CD8-positive, alpha-beta T cell (primary cell): ENCODE measurements at regions of chr22 and their contacts with region 1.

Region 1: GRCh38 chr22:50244420-50245213 is at the start of gene TUBGCP6:
- DNase-seq: peak; percentile 77 to 96 (median 91)
- ATAC-seq: peak; percentile 77
- H3K4me3 ChIP-seq: peak within 1 kb of the TSS; percentile 99
- H3K4me3 Mint-ChIP-seq: peak within 1 kb of the TSS; percentile 100
- H3K27ac ChIP-seq: peak within 1 kb of the TSS; percentile 94 to 99
- H3K27ac Mint-ChIP-seq: peak within 1 kb of the TSS; percentile 100
- H3K4me1 ChIP-seq: peaks cover 56% of the 10 kb centered on the region
- H3K4me1 Mint-ChIP-seq: peaks cover 51% of the 10 kb centered on the region
- H3K27me3 ChIP-seq: no peaks in the 10 kb centered on the region
- H3K27me3 Mint-ChIP-seq: no peaks in the 10 kb centered on the region
- CTCF ChIP-seq: peak; percentile 27
- total RNA-seq, gene TUBGCP6: 121 to 122 TPM

Region 2: GRCh38 chr22:49992921-49993648 is 251.5 kb before region 1 on chr22:
- CTCF ChIA-PET with region 1: no interaction called
- POLR2A ChIA-PET with region 1: no interaction called
- intact Hi-C with region 1: no loop called
- DNase-seq: peak; percentile 39 to 85 (median 74)
- ATAC-seq: peak; percentile 95
- H3K4me3 ChIP-seq: no peak overlapping the region
- H3K4me3 Mint-ChIP-seq: no peak overlapping the region
- H3K27ac ChIP-seq: no peak overlapping the region
- H3K27ac Mint-ChIP-seq: peak overlapping the region; percentile 21
- H3K4me1 ChIP-seq: peaks cover 8% of the 10 kb centered on the region
- H3K4me1 Mint-ChIP-seq: peaks cover 5% of the 10 kb centered on the region
- H3K27me3 ChIP-seq: no peaks in the 10 kb centered on the region
- H3K27me3 Mint-ChIP-seq: peaks cover 3% of the 10 kb centered on the region
- CTCF ChIP-seq: peak; percentile 77

Region 3: DNA sequence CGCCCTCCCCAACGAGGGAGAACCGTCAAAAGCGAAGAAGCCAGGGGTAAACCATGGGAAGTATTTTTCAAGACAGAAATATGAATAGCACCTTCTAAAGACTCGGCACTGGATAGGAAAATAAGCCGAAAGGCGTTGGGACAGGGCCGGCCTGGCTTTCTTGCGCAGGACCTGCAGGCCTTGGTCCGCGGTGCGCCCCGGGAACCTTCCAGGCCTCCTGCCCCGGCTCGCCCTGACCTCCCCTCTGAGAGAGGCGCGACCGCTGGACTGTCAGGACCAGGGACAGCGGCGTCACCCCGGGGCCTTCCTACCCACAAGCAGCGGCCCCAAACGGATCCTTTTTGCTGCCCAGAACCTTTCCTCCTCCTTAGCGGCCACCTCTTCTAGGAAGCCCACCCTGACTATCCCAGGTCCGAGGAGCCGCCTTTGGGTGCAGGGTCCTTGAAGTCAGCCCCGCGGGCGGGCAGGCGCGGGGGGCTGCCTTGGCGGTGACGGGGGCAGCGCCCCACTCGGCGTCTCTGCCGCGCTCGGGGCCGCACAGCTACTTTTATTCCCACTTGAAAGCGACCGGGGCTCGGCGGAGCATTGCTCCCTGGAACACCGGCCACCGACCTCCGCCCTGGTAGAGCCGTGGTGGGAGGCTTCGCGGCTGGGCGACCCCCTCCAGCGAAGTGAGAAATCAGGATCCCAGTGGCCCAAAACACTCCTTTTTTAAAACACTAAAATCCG is 26.2 kb after region 1 on chr22:
- CTCF ChIA-PET with region 1: interaction called, 4 read pairs
- POLR2A ChIA-PET with region 1: no interaction called
- intact Hi-C with region 1: loop called in 1 of 2 experiments (anchors 1 kb)
- DNase-seq: peak; percentile 49 to 82 (median 72)
- ATAC-seq: peak; percentile 64
- H3K4me3 ChIP-seq: peak overlapping the region; percentile 45 to 65
- H3K4me3 Mint-ChIP-seq: peak overlapping the region; percentile 69
- H3K27ac ChIP-seq: no peak overlapping the region
- H3K27ac Mint-ChIP-seq: no peak overlapping the region
- H3K4me1 ChIP-seq: peaks cover 25% of the 10 kb centered on the region
- H3K4me1 Mint-ChIP-seq: peaks cover 18% of the 10 kb centered on the region
- H3K27me3 ChIP-seq: peaks cover 0 to 2% of the 10 kb centered on the region in 2 experiments
- H3K27me3 Mint-ChIP-seq: peaks cover 3% of the 10 kb centered on the region
- CTCF ChIP-seq: no peak

Region 4: DNA sequence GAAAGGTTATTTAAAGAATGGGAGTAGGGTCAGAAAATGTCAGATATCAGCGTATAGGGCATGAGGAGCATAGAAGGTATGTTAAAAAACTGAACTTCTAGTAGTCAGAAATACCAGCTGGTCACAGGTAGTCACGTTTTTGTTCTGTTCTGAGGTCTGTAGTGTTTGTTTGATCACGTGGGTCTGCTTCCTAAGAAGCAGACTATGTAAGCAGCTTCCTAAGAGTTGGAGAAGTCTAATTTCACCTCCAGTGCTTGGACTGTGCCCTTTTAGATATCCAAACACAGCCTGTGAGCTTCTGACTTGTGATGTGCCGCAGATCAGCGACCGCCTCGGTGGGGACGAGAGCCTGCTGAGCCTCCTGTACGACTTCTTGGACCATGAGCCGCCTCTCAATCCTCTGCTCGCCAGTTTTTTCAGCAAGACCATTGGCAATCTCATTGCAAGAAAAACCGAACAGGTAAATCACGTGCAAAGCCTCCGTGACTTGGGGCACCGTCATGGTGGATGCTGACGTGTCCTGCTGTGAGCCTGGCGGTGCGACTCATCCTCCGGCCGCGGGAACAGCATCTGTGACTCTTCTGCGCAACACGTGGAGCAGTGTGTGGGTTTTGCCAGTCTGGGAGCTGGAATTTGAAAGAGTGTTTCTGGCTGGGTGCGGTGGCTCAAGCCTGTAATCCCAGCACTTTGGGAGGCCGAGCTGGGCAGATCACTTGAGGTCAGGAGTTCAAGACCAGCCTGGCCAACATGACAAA is 162.0 kb after region 1 on chr22:
- CTCF ChIA-PET with region 1: no interaction called
- POLR2A ChIA-PET with region 1: no interaction called
- intact Hi-C with region 1: no loop called
- DNase-seq: no peak
- ATAC-seq: no peak
- H3K4me3 ChIP-seq: no peak overlapping the region
- H3K4me3 Mint-ChIP-seq: no peak overlapping the region
- H3K27ac ChIP-seq: no peak overlapping the region
- H3K27ac Mint-ChIP-seq: peak overlapping the region; percentile 43
- H3K4me1 ChIP-seq: no peaks in the 10 kb centered on the region
- H3K4me1 Mint-ChIP-seq: peaks cover 8% of the 10 kb centered on the region
- H3K27me3 ChIP-seq: no peaks in the 10 kb centered on the region
- H3K27me3 Mint-ChIP-seq: no peaks in the 10 kb centered on the region
- CTCF ChIP-seq: no peak

Region 5: DNA sequence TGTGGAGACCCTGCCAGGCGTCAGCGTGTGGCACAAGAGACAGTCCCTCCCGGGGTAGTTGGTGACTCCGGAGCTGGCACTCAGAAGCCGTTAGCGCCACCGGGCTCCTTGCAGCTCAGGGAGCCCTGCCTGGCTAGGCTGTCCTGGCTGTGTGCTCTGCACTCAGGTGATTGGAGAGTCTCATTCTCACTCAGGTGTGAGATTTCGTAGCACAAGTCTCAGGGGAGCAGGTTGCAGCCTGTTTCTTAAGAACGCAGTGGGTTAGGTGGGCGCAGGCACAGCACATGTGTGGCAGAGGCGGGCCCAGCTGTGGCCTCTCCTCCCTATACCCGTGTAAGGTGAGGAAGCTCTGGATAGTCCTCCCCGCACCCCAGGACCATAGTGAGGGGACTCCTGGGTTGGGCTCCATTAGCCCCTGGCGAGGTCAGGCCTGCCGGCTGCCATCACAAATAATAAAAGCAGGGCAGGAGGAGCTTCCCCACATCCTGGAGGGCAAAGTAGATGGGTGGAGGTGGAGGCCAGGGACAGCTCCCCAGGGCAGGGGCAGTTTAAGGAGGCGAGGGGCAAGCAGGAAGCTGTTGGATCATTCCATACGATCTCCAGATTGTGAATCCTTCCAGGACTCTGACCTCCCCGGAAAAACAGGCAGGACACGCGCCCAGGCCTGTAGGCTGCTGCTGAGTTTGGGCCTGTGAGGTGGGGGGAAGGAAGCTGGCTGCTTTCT is 190.8 kb after region 1 on chr22:
- CTCF ChIA-PET with region 1: no interaction called
- POLR2A ChIA-PET with region 1: no interaction called
- intact Hi-C with region 1: no loop called
- DNase-seq: peak in 1 of 9 experiments; percentile 1
- ATAC-seq: no peak
- H3K4me3 ChIP-seq: no peak overlapping the region
- H3K4me3 Mint-ChIP-seq: no peak overlapping the region
- H3K27ac ChIP-seq: no peak overlapping the region
- H3K27ac Mint-ChIP-seq: no peak overlapping the region
- H3K4me1 ChIP-seq: no peaks in the 10 kb centered on the region
- H3K4me1 Mint-ChIP-seq: no peaks in the 10 kb centered on the region
- H3K27me3 ChIP-seq: no peaks in the 10 kb centered on the region
- H3K27me3 Mint-ChIP-seq: no peaks in the 10 kb centered on the region
- CTCF ChIP-seq: no peak

Region 6: GRCh38 chr22:50474668-50475492 is 230.3 kb after region 1 on chr22 and contains the start of gene SBF1:
- CTCF ChIA-PET with region 1: interaction called, 4 read pairs
- POLR2A ChIA-PET with region 1: no interaction called
- intact Hi-C with region 1: loop called in 1 of 2 experiments (anchors 10 kb)
- DNase-seq: peak; percentile 78 to 94 (median 86)
- ATAC-seq: peak; percentile 65
- H3K4me3 ChIP-seq: peak within 1 kb of the TSS; percentile 63 to 82
- H3K4me3 Mint-ChIP-seq: peak within 1 kb of the TSS; percentile 94
- H3K27ac ChIP-seq: peak within 1 kb of the TSS; percentile 62 to 73
- H3K27ac Mint-ChIP-seq: peak within 1 kb of the TSS; percentile 96
- H3K4me1 ChIP-seq: peaks cover 46% of the 10 kb centered on the region
- H3K4me1 Mint-ChIP-seq: peaks cover 45% of the 10 kb centered on the region
- H3K27me3 ChIP-seq: no peaks in the 10 kb centered on the region
- H3K27me3 Mint-ChIP-seq: no peaks in the 10 kb centered on the region
- CTCF ChIP-seq: no peak
- total RNA-seq, gene SBF1: 209 to 215 TPM

Region 7: GRCh38 chr22:50507991-50508884 is 263.6 kb after region 1 on chr22 and contains the start of gene NCAPH2:
- CTCF ChIA-PET with region 1: no interaction called
- POLR2A ChIA-PET with region 1: interaction called, 4 read pairs
- intact Hi-C with region 1: loop called in 1 of 2 experiments (anchors 2 kb)
- DNase-seq: peak in 8 of 9 experiments; percentile 94 to 99 (median 98)
- ATAC-seq: peak; percentile 74
- H3K4me3 ChIP-seq: peak within 1 kb of the TSS; percentile 88 to 97
- H3K4me3 Mint-ChIP-seq: peak within 1 kb of the TSS; percentile 96
- H3K27ac ChIP-seq: peak within 1 kb of the TSS; percentile 93
- H3K27ac Mint-ChIP-seq: peak within 1 kb of the TSS; percentile 99
- H3K4me1 ChIP-seq: peaks cover 23% of the 10 kb centered on the region
- H3K4me1 Mint-ChIP-seq: peaks cover 26% of the 10 kb centered on the region
- H3K27me3 ChIP-seq: no peaks in the 10 kb centered on the region
- H3K27me3 Mint-ChIP-seq: no peaks in the 10 kb centered on the region
- CTCF ChIP-seq: no peak
- total RNA-seq, gene NCAPH2: 206 to 209 TPM